A549 (cell line): ENCODE measurements at regions of chr9 and their contacts with region 1.

Region 1: GRCh38 chr9:32378993-32379729 is 5.3 kb upstream of the ACO1 start:
- DNase-seq: peak; percentile 76 to 82
- ATAC-seq: peak; percentile 78 to 87
- H3K4me3 ChIP-seq: no peak overlapping the region
- H3K27ac ChIP-seq: no peak overlapping the region
- H3K4me1 ChIP-seq: peaks cover 5% of the 10 kb centered on the region; the same call in 2 of the 3 replicates
- CTCF ChIP-seq: peak; percentile 90
- EP300 ChIP-seq: no peak
- POLR2A ChIP-seq: no peak
- RAD21 ChIP-seq: peak; percentile 89 to 96

Region 2: DNA sequence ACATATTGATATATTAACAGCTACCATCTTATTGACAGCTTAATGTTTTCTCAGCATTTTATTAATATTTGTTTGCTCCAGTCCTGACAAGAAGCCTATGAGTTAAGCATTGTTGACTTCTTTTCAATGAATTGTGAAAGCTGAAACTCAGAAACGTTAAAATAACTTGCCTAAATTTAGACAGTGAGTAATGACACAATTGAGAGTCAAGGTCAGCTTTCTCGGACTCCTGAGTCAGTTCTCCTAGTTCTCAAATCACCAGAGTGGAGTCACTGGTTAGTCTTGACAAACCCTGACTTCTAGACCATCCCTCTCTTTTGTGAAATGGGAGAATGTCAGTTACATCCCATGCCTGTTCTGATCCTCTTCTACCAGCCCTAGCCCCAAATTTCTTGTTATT is 217.4 kb before region 1 on chr9:
- CTCF ChIA-PET with region 1: no interaction called
- POLR2A ChIA-PET with region 1: no interaction called
- DNase-seq: no peak
- ATAC-seq: no peak
- H3K4me3 ChIP-seq: no peak overlapping the region
- H3K27ac ChIP-seq: no peak overlapping the region
- H3K4me1 ChIP-seq: no peaks in the 10 kb centered on the region
- CTCF ChIP-seq: no peak
- EP300 ChIP-seq: no peak
- POLR2A ChIP-seq: no peak
- RAD21 ChIP-seq: no peak

Region 3: DNA sequence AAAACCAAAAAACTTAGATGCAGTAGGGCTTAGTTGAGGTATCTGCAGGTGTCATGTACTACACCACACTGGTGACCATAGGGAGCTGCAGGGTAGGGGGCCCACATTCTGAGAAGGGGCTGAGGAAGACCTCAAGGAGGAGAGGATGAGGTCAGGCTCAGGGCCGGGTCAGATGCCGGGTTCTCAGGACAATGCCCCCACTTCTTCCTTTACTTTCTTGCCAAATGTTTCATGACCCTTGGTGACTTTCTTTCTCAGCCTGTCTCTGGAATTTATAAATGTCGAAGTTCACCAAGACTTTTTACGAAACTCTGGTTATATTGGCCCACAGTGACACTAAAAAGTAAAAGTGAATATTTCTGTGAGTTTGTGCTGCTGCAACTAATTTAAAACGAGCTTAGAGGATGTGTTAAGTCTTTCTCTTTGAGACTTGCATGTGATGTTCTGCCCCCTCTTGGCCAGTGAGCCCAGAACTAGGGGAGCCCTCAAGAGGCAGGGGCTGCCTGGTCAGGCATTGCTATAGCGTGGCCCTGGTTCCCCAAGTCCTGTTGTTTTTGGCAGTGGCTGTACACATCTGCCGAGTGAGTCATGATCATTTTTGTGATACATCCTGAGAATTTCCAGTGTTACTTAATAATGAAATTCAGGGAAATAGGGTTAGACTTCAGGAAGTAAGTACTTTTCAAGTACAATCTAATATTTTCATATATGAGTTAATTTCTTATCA is 16.5 kb after region 1 on chr9:
- CTCF ChIA-PET with region 1: interaction called, 74 read pairs
- POLR2A ChIA-PET with region 1: interaction called, 4 read pairs
- DNase-seq: peak; percentile 26 to 31
- ATAC-seq: peak; percentile 84 to 92
- H3K4me3 ChIP-seq: no peak overlapping the region
- H3K27ac ChIP-seq: peak overlapping the region; percentile 35 to 60; a peak in 4 of 6 replicates
- H3K4me1 ChIP-seq: peaks cover 26% of the 10 kb centered on the region
- CTCF ChIP-seq: no peak
- EP300 ChIP-seq: no peak
- POLR2A ChIP-seq: no peak
- RAD21 ChIP-seq: no peak

Region 4: DNA sequence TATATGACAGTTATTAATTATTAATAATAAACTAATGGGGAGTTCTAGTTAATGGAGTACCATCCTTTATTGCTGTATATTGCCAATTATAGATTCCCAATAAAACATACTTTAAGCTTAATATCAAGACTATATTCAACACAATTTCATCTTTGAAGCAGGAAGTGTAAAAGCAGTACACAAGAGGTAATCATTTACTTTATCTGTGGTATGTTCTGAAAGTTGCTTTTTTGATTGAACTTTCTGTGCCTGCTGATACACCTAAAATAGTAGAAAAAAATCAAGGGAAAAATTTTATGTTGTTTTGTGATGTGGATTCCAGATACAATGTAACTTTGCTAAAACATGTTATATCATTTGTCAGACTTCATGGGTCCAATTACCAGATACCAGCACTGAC is 63.3 kb after region 1 on chr9:
- CTCF ChIA-PET with region 1: interaction called, 159 read pairs
- POLR2A ChIA-PET with region 1: no interaction called
- DNase-seq: no peak
- ATAC-seq: no peak
- H3K4me3 ChIP-seq: no peak overlapping the region
- H3K27ac ChIP-seq: no peak overlapping the region
- H3K4me1 ChIP-seq: no peaks in the 10 kb centered on the region
- CTCF ChIP-seq: no peak
- EP300 ChIP-seq: no peak
- POLR2A ChIP-seq: no peak
- RAD21 ChIP-seq: no peak

Region 5: GRCh38 chr9:32497921-32498320 is 118.8 kb after region 1 on chr9:
- CTCF ChIA-PET with region 1: interaction called, 12 read pairs
- POLR2A ChIA-PET with region 1: no interaction called
- DNase-seq: no peak
- ATAC-seq: no peak
- H3K4me3 ChIP-seq: no peak overlapping the region
- H3K27ac ChIP-seq: no peak overlapping the region
- H3K4me1 ChIP-seq: peaks cover 16% of the 10 kb centered on the region; the same call in 2 of the 3 replicates
- CTCF ChIP-seq: no peak
- EP300 ChIP-seq: no peak
- POLR2A ChIP-seq: no peak
- RAD21 ChIP-seq: no peak

Region 6: GRCh38 chr9:32533336-32533735 is 154.2 kb after region 1 on chr9:
- CTCF ChIA-PET with region 1: interaction called, 159 read pairs
- POLR2A ChIA-PET with region 1: no interaction called
- DNase-seq: no peak
- ATAC-seq: no peak
- H3K4me3 ChIP-seq: no peak overlapping the region
- H3K27ac ChIP-seq: no peak overlapping the region
- H3K4me1 ChIP-seq: no peaks in the 10 kb centered on the region
- CTCF ChIP-seq: no peak
- EP300 ChIP-seq: no peak
- POLR2A ChIP-seq: no peak
- RAD21 ChIP-seq: no peak

Region 7: GRCh38 chr9:32566770-32567169 is 187.6 kb after region 1 on chr9:
- CTCF ChIA-PET with region 1: interaction called, 507 read pairs
- POLR2A ChIA-PET with region 1: interaction called, 14 read pairs
- DNase-seq: no peak
- ATAC-seq: no peak
- H3K4me3 ChIP-seq: no peak overlapping the region
- H3K27ac ChIP-seq: no peak overlapping the region
- H3K4me1 ChIP-seq: peaks cover 10% of the 10 kb centered on the region
- CTCF ChIP-seq: no peak
- EP300 ChIP-seq: no peak
- POLR2A ChIP-seq: no peak
- RAD21 ChIP-seq: no peak

Region 8: GRCh38 chr9:32589083-32589723 is 210.0 kb after region 1 on chr9:
- CTCF ChIA-PET with region 1: interaction called, 507 read pairs
- POLR2A ChIA-PET with region 1: no interaction called
- DNase-seq: peak; percentile 53 to 63
- ATAC-seq: peak; percentile 89 to 93; a peak in 5 of 6 replicates
- H3K4me3 ChIP-seq: no peak overlapping the region
- H3K27ac ChIP-seq: no peak overlapping the region
- H3K4me1 ChIP-seq: no peaks in the 10 kb centered on the region
- CTCF ChIP-seq: peak; percentile 77
- EP300 ChIP-seq: no peak
- POLR2A ChIP-seq: no peak
- RAD21 ChIP-seq: peak; percentile 77

Region 9: DNA sequence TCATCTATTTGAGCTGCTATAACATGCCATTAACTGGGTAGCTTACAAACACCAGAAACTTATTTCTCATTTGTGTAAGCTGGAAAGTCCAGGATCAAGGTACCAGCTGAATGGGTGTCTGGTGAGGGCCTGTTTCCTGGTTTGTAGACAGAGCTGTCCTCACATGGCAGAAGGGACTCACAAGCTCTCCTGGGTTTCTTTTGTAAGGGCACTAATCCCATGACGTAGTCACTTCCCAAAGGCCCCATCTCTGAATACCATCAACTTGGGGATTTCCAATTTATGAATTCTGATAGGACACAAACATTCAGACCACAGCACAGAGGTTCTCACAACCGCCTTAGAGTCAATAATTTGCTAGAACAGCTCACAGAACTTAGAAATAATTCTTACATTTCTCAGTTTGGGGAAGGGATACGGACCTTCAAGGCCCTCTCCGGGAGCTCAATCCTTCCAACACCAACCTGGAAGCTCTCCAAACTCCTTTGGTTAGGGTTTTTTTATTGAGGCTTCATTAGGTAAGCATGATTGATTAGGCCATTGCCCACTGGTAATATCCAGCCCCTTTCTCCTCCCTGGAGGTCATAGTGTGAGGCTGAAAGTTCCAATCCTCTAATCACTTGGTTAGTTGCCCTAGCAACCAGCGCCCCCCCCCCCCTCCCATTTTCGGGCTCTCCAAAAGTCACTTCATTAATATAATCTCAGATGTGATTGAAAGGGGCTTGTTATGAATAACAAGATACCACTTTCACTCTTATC is 638.3 kb after region 1 on chr9:
- CTCF ChIA-PET with region 1: no interaction called
- POLR2A ChIA-PET with region 1: no interaction called
- DNase-seq: no peak
- ATAC-seq: peak in 1 of 2 experiments; percentile 19; a peak in 1 of 6 replicates
- H3K4me3 ChIP-seq: no peak overlapping the region
- H3K27ac ChIP-seq: no peak overlapping the region
- H3K4me1 ChIP-seq: peaks cover 6% of the 10 kb centered on the region; the same call in 2 of the 3 replicates
- CTCF ChIP-seq: no peak
- EP300 ChIP-seq: no peak
- POLR2A ChIP-seq: no peak
- RAD21 ChIP-seq: no peak